Dendritic cell treated with granulocyte-macrophage colony-stimulating factor and Interleukin-4, amounts not matched to agents 40 ng/mL and 50 ng/mL, for 4 days (primary cell): ENCODE measurements at regions of chr2 and their contacts with region 1.

Region 1: GRCh38 chr2:71068218-71069035 is at the start of gene NAGK:
- H3K4me3 Mint-ChIP-seq: peak within 1 kb of the TSS; percentile 85
- H3K27ac Mint-ChIP-seq: peak within 1 kb of the TSS; percentile 96
- H3K4me1 Mint-ChIP-seq: peaks cover 77% of the 10 kb centered on the region
- H3K27me3 Mint-ChIP-seq: no peaks in the 10 kb centered on the region

Region 2: DNA sequence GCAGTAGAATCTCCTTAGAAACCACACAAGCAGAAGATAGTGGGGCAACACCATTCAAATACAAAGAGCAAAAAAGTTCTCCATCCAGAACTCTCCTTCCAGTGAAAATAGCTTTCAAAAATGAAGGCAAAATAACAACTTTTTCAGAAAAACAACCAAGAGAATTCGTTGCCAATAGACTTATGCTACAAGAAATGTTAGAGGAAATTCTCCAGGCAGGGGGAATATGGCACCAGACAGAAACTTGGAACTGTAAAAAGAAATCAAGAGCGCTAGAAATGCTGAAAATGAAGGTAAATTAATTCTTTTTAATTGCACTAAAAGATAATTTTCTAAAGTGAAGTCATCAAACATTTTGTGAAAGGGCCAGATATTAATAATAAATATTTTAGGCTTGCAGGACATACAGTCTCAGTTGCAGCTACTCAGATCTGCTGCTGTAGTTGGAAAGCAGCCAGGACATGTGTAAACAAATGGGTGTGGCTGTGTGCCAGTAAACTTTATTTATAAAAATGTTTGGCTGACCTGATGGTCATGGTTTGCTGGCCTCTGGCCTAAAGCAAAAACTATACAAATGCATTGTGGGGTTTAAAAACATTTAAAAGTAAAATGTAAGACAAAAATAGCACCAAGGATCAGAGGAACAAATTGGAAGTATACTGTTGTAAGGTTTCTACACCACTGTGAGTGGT is 441.1 kb before region 1 on chr2:
- intact Hi-C with region 1: no loop called
- H3K4me3 Mint-ChIP-seq: no peak overlapping the region
- H3K27ac Mint-ChIP-seq: no peak overlapping the region
- H3K4me1 Mint-ChIP-seq: peaks cover 3% of the 10 kb centered on the region
- H3K27me3 Mint-ChIP-seq: peaks cover 10% of the 10 kb centered on the region

Region 3: DNA sequence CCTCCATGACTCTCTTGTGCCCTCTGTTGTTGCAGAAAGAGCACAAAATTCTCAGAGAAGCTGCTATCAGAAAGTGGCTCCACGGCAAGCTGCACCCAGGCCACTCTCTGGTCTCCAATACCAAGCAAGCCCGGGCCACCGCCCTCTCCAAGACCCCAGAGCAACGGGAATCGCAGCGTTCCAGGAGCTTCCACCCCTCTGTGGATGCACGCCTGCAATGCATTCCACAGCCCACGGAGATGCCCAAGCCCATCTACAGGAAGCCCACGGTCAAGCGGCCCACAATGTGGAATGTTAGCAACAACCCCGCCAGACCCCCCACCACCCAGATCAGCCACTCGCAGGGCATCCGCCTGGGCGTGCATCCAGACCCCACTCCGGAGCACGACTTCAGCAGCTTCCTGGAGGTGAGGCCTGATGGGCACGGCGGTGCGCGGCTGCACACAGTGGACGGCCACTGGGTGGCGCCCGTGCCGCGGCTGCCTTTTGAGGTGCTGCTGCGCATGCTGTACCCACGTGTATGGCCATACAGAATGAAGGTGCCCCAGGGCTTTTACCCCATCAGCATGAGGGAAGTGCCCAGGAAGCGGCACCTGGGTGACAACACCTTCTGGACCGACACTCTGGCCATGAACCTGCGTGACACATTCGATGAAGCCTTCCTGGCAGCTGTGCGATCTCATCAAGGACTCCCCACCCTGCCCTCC is 83.7 kb before region 1 on chr2:
- intact Hi-C with region 1: loop called (anchors 5 kb)
- H3K4me3 Mint-ChIP-seq: no peak overlapping the region
- H3K27ac Mint-ChIP-seq: no peak overlapping the region
- H3K4me1 Mint-ChIP-seq: peaks cover 39% of the 10 kb centered on the region
- H3K27me3 Mint-ChIP-seq: peaks cover 4% of the 10 kb centered on the region

Region 4: DNA sequence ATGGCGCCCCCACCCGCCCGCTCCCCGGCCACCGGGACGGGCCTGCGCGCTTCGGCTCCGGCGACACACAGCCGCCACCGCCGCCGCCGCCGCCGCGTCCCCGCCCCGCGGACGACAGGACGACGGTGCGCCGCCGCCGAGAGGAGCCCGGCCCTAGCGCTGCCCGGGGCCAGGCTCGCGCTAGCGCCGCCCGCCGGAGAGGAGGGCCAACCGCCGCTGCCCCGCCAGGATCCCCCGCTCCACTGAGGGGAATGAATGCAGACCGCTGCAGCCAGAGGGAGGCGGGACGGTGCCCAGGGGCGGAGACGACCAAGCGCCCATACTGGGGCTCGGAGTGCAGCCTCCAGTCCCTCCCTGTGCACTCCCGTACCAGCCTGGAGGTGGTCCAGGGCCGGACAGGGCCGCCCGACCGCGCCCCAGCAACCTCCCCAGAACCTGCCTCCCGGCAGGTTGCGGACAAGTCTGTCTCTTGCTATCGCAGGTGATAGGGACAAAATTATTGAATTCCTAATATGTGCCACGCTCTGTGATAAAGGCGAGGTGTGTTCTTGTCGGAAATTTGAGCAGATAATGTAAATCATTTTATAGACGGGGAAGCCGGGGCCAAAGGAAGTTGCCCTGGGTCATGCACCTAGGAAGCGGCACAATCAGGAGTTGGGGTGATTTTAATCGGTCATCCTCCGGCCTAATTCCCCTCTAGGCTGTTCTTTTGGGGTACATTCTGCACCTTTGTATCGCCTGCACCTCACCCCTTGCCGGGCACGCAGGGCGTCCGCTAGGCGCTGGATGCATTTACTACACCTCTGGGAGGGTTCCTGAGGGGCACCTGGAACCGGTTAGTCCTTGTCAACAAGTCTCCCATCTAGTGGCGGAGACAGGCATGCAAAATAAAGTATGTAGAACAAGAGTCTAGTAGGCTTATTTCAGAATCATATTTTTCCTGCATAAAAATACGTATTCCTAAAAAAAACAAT is 73.4 kb before region 1 on chr2 and contains the start of gene TEX261:
- intact Hi-C with region 1: loop called (anchors 2 kb)
- H3K4me3 Mint-ChIP-seq: peak within 1 kb of the TSS; percentile 90
- H3K27ac Mint-ChIP-seq: peak within 1 kb of the TSS; percentile 91
- H3K4me1 Mint-ChIP-seq: peaks cover 54% of the 10 kb centered on the region
- H3K27me3 Mint-ChIP-seq: no peaks in the 10 kb centered on the region

Region 5: DNA sequence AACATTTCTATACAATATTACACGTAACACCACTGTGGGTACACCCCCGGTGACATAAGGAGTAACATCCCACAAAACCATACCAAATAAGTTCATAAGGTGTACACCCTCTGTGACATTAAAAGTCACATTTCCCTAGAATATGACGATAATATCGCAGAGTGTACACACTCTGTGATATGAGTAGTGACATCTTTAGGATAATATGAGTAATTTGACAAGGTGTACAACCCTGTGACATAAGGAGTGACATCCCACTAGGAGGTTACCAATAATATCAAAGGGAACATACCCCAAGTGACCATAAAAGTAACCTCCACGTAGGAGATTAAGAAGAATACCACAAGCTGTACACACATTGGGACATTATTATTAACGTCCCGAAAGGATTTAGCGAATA is 49.8 kb before region 1 on chr2:
- intact Hi-C with region 1: loop called (anchors 5 kb)
- H3K4me3 Mint-ChIP-seq: no peak overlapping the region
- H3K27ac Mint-ChIP-seq: no peak overlapping the region
- H3K4me1 Mint-ChIP-seq: peaks cover 6% of the 10 kb centered on the region
- H3K27me3 Mint-ChIP-seq: no peaks in the 10 kb centered on the region

Region 6: DNA sequence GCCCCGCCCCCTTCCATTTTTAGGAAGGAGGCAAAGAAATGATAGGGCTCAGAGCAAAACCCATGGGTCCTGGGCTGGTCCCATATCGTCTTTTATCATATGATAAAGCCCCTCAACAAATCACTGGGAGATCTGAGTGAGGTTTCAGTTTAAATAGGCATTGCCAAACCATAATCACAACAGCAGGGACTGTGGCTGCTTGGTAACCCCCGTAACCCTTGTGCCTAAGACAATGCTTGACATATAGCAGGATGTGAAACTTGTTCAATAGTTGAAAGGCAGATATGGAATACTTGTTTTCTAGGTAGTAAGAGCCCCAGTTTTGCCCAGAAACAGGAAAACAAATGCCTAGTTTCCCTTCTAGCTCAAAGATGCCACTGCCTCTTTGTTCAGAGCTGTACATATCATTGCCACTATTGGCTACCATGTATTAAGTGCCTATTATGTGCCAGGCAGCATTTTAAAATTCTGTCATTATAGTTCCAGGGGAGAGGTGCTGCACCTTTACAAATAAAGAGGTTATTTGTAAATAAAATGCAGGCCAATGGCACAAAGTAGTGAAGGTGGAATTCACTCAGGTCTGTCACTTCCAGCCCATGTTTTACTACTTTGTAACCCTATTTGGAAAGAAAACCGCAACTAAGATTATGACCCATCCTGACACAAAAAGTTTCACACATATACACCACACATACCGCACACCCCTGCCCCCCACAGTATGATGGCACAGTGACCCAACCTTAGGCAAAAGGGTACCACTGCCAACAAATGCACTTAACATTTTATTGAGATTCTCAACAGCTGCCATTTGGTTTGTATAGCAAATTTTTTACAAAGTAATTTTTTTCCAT is 14.2 kb after region 1 on chr2:
- intact Hi-C with region 1: loop called (anchors 2 kb)
- H3K4me3 Mint-ChIP-seq: no peak overlapping the region
- H3K27ac Mint-ChIP-seq: peak overlapping the region; percentile 74
- H3K4me1 Mint-ChIP-seq: peaks cover 47% of the 10 kb centered on the region
- H3K27me3 Mint-ChIP-seq: no peaks in the 10 kb centered on the region

Region 7: GRCh38 chr2:71100195-71100964 is 32.0 kb after region 1 on chr2:
- intact Hi-C with region 1: no loop called
- H3K4me3 Mint-ChIP-seq: no peak overlapping the region
- H3K27ac Mint-ChIP-seq: no peak overlapping the region
- H3K4me1 Mint-ChIP-seq: peaks cover 5% of the 10 kb centered on the region
- H3K27me3 Mint-ChIP-seq: no peaks in the 10 kb centered on the region

Region 8: DNA sequence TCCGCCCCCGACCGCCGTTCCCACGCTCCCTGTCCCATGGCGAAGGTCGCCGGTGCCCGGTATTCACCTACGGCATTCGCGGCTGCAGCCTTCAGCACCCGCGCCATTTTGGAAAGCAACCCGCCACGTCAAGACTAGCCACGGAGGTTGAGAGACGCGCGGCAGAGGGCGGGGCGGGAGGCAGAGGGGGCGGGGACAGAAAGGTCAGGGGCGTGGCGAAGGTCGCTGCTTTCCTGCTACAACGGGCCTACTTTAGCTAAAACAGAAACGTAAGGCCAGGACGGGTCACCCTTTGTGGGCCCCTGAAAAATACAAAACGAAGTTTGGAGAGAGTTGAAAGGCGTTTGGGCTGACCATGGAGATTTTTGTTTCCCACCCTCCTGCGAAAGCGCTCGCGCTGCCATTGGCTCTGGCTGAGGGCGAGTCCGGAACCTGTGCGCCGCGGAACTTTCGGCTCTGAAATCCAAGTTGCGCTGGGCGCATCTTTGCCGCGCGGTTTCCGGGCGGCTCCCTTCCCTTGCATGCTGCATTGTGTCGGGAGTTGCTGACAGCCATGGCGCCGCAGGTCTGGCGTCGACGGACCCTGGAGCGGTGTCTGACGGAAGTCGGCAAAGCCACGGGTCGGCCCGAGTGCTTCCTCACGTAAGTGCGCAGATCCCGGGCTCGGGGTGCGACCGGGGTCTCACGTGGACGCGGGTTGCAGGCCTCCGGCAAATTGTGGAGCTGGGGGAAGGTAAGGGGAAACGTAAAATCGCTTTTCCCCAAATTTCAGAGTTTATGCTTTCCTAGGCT is 61.9 kb after region 1 on chr2 and contains the starts of genes MCEE and MPHOSPH10:
- intact Hi-C with region 1: loop called (anchors 1 kb)
- H3K4me3 Mint-ChIP-seq: no peak within 1 kb of the TSS
- H3K27ac Mint-ChIP-seq: no peak within 1 kb of the TSS
- H3K4me1 Mint-ChIP-seq: no peaks in the 10 kb centered on the region
- H3K27me3 Mint-ChIP-seq: no peaks in the 10 kb centered on the region